K562 (cell line): ENCODE measurements at regions of chr16 and their contacts with region 1.

Region 1: GRCh38 chr16:68128577-68129305 is 43.6 kb downstream of the NFATC3 start:
- DNase-seq: no peak
- ATAC-seq: peak; percentile 67
- H3K4me3 ChIP-seq: no peak overlapping the region
- H3K27ac ChIP-seq: no peak overlapping the region
- H3K4me1 ChIP-seq: peaks cover 0 to 3% of the 10 kb centered on the region in 2 experiments; a peak in 1 of 5 replicates
- H3K27me3 ChIP-seq: no peaks in the 10 kb centered on the region
- CTCF ChIP-seq: no peak
- EP300 ChIP-seq: no peak
- POLR2A ChIP-seq: no peak
- RAD21 ChIP-seq: no peak

Region 2: GRCh38 chr16:68117884-68118283 is 10.9 kb before region 1 on chr16:
- CTCF ChIA-PET with region 1: no interaction called
- POLR2A ChIA-PET with region 1: interaction called, 17 read pairs
- in situ Hi-C with region 1: no loop called
- intact Hi-C with region 1: no loop called
- DNase-seq: no peak
- ATAC-seq: no peak; the same call in 2 of the 3 replicates
- H3K4me3 ChIP-seq: no peak overlapping the region
- H3K27ac ChIP-seq: no peak overlapping the region
- H3K4me1 ChIP-seq: peaks cover 12 to 15% of the 10 kb centered on the region in 2 experiments
- H3K27me3 ChIP-seq: no peaks in the 10 kb centered on the region
- CTCF ChIP-seq: no peak
- EP300 ChIP-seq: no peak
- POLR2A ChIP-seq: no peak
- RAD21 ChIP-seq: no peak

Region 3: DNA sequence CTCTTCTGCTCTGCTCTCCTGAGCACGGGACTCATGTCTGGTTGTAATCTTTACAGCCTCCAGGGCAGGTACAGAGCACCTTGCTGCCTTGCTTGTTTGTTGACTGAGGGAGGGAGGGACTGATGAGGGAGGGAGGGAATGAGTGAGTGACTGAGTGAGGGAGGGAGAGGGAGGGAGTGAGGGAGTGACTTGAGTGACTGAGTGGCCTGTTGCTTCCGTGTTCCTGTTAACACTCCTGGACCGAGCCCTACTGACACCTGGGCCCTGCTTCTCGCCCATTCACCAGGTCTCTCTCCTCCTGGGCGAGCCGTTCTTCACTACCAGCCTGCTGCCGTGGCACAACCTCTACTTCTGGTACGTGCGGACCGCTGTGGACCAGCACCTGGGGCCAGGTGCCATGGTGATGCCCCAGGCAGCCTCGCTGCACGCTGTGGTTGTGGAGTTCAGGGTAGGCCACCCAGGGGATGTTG is 223.3 kb after region 1 on chr16:
- CTCF ChIA-PET with region 1: no interaction called
- POLR2A ChIA-PET with region 1: no interaction called
- in situ Hi-C with region 1: no loop called
- intact Hi-C with region 1: no loop called
- DNase-seq: no peak
- ATAC-seq: no peak
- H3K4me3 ChIP-seq: no peak overlapping the region
- H3K27ac ChIP-seq: no peak overlapping the region
- H3K4me1 ChIP-seq: 0 out of 5 replicates have a peak, but pooled peaks cover 0 to 2% of the 10 kb centered on the region in 2 experiments
- H3K27me3 ChIP-seq: no peaks in the 10 kb centered on the region
- CTCF ChIP-seq: no peak
- EP300 ChIP-seq: no peak
- POLR2A ChIP-seq: no peak
- RAD21 ChIP-seq: no peak